Tibial artery (tissue), 4 donors: ENCODE measurements at regions of chr6 and their contacts with region 1.

Region 1: DNA sequence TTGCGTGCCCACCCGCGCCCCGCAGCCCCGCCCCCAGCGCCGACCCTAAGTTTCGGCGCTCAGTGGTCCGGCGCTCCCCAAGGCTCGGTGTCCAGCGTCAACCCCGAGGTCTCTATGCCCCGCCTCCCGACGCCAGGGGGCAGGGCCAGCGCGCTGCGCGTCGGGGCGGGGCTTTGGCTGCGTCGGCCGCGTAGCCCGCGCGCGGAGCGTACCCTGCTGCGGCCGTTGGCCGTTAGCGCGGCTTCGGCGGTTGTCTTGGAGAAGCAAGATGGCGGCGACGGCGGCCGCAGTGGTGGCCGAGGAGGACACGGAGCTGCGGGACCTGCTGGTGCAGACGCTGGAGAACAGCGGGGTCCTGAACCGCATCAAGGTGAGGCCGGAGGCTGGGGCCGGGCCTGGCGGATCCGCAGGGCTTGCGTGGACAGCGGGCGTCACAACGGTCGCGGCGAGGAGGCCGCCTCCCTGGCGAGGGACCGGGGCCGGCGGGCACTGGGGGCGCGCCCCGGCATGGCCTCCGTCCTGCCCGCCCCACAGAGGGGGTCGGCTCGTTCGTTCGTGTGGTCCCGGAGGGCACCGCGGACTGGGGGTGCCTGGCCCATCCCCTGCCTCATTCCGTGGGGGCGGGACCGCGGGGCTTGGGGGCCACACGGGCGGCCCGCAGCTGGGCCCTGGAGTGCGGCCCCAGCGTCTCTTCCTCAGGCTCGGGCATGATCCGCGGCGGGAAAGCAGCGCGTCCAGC is at the start of gene CEP43:
- DNase-seq: peak; percentile 93 to 97
- H3K4me3 ChIP-seq: peak within 1 kb of the TSS; percentile 73 to 80
- H3K27ac ChIP-seq: peak within 1 kb of the TSS; percentile 53 to 78
- H3K4me1 ChIP-seq: peaks cover 0 to 25% (median 12%) of the 10 kb centered on the region in 4 donors
- H3K27me3 ChIP-seq: no peaks in the 10 kb centered on the region
- CTCF ChIP-seq: peak in 1 of 2 experiments; percentile 24

Region 2: GRCh38 chr6:166619912-166620311 is 379.4 kb before region 1 on chr6:
- intact Hi-C with region 1: loop called (anchors 2 kb)
- DNase-seq: no peak
- H3K4me3 ChIP-seq: no peak overlapping the region
- H3K27ac ChIP-seq: peak overlapping the region; percentile 48 to 53
- H3K4me1 ChIP-seq: peaks cover 0 to 48% (median 21%) of the 10 kb centered on the region in 4 donors
- H3K27me3 ChIP-seq: no peaks in the 10 kb centered on the region
- CTCF ChIP-seq: no peak

Region 3: GRCh38 chr6:166775180-166776081 is 223.9 kb before region 1 on chr6:
- intact Hi-C with region 1: loop called (anchors 10 kb)
- DNase-seq: peak; percentile 41 to 49
- H3K4me3 ChIP-seq: no peak overlapping the region
- H3K27ac ChIP-seq: no peak overlapping the region
- H3K4me1 ChIP-seq: no peaks in the 10 kb centered on the region
- H3K27me3 ChIP-seq: peaks cover 0 to 9% of the 10 kb centered on the region in 2 donors
- CTCF ChIP-seq: peak; percentile 58 to 86

Region 4: GRCh38 chr6:166800137-166800536 is 199.2 kb before region 1 on chr6:
- intact Hi-C with region 1: no loop called
- DNase-seq: no peak
- H3K4me3 ChIP-seq: no peak overlapping the region
- H3K27ac ChIP-seq: no peak overlapping the region
- H3K4me1 ChIP-seq: no peaks in the 10 kb centered on the region
- H3K27me3 ChIP-seq: no peaks in the 10 kb centered on the region
- CTCF ChIP-seq: no peak

Region 5: DNA sequence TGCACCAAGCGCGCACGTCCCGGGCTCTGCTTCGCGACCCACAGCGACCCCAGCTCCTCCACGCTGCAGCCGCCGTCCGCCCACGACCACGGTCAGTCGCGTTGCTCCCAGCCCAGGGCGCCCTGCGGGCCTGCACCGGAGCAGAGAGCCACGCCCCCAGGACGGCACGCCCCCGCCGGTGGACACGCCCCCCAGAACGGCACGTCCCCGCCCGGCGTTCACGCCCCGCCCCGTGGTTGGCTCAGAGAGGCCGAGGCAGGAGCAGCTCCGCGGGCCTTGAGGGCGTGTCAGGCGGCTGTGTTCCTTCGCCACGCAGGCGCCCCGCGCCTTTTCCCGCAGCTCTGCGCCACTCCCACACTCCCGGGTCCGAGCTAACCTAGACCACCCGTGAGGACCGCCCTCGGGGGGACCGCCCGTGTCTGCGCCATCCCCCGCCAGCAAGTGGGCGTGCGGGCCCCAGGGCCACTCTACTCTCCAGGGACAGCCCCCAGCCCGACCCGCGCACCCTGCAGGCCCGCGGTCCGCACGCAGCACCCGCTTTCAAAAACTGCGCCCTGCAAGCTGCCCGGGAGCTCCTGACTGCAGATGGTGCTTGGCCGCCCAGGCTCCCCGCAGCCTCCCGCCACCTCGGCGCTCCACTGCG is 42.7 kb before region 1 on chr6 and contains the start of gene RNASET2:
- intact Hi-C with region 1: loop called (anchors 2 kb)
- DNase-seq: peak; percentile 97 to 98
- H3K4me3 ChIP-seq: peak within 1 kb of the TSS; percentile 78 to 79
- H3K27ac ChIP-seq: peak within 1 kb of the TSS; percentile 84 to 87
- H3K4me1 ChIP-seq: peaks cover 0 to 17% (median 14%) of the 10 kb centered on the region in 4 donors
- H3K27me3 ChIP-seq: no peaks in the 10 kb centered on the region
- CTCF ChIP-seq: no peak

Region 6: DNA sequence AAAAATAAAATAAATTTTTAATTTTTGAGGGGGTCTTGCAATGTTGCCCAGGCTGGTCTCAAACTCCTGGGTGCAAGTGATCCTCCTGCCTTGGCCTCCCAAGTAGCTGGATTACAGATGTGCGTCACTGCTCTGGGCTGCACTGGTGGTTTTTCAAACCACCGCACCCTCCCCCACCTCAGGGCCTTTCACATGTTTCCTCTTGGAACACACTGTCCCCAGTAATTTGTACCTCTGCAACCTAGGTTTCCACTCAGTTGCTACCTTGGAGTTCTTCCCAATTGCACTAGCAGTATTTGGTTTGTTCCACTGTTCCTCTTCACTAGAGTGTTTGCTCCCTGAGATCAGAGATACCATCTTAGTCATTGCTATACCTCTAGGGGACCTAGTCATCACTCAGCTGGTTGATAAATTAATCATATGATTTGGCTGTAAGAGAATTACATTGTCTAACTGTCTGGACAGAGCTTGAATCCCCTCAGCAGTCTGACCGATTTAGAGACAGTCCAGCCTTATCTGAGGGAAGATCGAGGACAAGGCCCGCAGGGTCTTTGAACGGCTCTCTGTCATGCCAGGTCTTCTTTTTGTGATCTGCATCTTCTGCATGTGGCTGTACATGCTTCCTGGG is 31.9 kb after region 1 on chr6:
- intact Hi-C with region 1: no loop called
- DNase-seq: no peak
- H3K4me3 ChIP-seq: no peak overlapping the region
- H3K27ac ChIP-seq: no peak overlapping the region
- H3K4me1 ChIP-seq: no peaks in the 10 kb centered on the region
- H3K27me3 ChIP-seq: no peaks in the 10 kb centered on the region
- CTCF ChIP-seq: no peak